ENCODE measurements at regions of chrX and their contacts with region 1.

Region 1: GRCh38 chrX:31070057-31070468 is 1.8 kb downstream of the FTHL17 start:
- DNase-seq: no peak
- H3K4me3 ChIP-seq: no peak overlapping the region
- H3K27ac ChIP-seq: no peak overlapping the region
- H3K4me1 ChIP-seq: no peaks in the 10 kb centered on the region
- H3K27me3 ChIP-seq: no peaks in the 10 kb centered on the region
- CTCF ChIP-seq: no peak

Region 2: DNA sequence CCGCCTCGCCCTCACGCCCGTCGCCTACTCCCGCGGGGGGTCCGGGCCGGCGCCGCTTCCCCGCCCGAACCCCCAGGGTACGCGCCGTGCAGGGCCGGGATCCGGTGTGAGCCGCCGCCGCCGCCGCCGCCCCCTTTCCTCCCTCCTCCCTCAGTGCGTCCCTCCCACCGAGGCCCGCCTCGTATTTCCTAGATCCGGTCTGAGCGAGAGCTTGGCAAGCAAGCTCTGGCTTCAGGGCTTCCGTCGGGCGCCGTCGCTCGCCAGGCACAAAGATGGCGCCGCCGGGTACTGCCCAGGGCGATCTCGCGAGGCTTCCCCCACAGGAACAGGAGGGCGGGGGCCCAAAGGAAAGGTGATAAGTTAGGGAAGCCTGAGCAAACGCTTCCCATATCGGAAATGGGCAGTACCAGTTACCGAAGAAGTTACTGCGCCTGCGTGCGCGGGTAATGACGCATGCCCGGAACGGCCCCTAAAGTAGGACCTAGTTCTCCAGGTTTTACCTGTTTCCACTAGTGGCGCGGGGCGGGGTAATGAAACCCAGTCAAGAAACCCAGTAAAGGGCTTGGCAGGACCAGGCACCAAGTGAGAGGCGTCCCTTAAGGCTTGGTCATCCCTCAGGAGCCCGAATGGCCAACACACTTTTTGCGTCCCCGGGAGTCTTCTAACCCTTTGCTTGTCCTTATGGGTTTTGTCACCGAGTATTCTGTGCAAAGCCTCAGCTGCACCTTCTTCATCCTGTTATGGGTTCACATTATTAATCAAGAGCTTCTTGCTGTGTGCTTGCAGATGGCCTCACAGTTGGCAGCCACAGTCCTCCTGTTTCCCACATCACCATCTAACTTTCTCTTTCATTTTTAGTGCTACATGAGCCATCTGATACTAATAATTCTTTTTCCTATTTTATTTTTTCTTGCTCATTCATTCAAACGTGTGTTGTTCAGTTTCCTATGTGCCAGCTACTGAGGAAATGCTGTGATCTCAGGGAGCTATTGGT is 180.6 kb before region 1 on chrX and contains the start of gene TAB3:
- intact Hi-C with region 1: no loop called
- DNase-seq: peak; percentile 94
- H3K4me3 ChIP-seq: peak within 1 kb of the TSS; percentile 63
- H3K27ac ChIP-seq: peak within 1 kb of the TSS; percentile 79
- H3K4me1 ChIP-seq: no peaks in the 10 kb centered on the region
- H3K27me3 ChIP-seq: no peaks in the 10 kb centered on the region
- CTCF ChIP-seq: no peak
- total RNA-seq, gene TAB3: 12.3 to 22.2 TPM

Region 3: GRCh38 chrX:31112226-31112999 is 42.4 kb after region 1 on chrX:
- intact Hi-C with region 1: loop called (anchors 5 kb)
- DNase-seq: no peak
- H3K4me3 ChIP-seq: no peak overlapping the region
- H3K27ac ChIP-seq: no peak overlapping the region
- H3K4me1 ChIP-seq: no peaks in the 10 kb centered on the region
- H3K27me3 ChIP-seq: no peaks in the 10 kb centered on the region
- CTCF ChIP-seq: no peak

Region 4: DNA sequence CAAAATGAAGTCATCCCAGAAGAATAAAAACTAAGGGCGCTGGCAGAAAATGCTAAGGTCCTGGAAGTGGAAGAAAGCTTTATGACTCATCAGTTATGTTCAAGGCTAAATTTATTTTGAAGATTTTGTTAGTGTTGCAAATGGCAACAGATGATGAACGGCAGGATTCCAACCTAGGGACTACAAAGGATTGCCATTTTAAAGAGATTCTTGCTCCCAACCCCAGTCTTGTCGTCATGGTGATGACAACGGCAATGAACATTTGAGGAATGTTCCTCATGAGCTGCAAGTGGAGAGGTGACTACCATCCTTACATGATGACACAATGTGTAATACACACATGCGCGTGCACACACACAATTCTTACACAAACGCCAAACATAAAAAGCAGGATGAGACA is 56.1 kb after region 1 on chrX:
- intact Hi-C with region 1: no loop called
- DNase-seq: no peak
- H3K4me3 ChIP-seq: no peak overlapping the region
- H3K27ac ChIP-seq: no peak overlapping the region
- H3K4me1 ChIP-seq: no peaks in the 10 kb centered on the region
- H3K27me3 ChIP-seq: no peaks in the 10 kb centered on the region
- CTCF ChIP-seq: no peak

Measured in colonic mucosa (tissue), 4 donors.